ENCODE measurements at regions of chr2 and their contacts with region 1.

Region 1: DNA sequence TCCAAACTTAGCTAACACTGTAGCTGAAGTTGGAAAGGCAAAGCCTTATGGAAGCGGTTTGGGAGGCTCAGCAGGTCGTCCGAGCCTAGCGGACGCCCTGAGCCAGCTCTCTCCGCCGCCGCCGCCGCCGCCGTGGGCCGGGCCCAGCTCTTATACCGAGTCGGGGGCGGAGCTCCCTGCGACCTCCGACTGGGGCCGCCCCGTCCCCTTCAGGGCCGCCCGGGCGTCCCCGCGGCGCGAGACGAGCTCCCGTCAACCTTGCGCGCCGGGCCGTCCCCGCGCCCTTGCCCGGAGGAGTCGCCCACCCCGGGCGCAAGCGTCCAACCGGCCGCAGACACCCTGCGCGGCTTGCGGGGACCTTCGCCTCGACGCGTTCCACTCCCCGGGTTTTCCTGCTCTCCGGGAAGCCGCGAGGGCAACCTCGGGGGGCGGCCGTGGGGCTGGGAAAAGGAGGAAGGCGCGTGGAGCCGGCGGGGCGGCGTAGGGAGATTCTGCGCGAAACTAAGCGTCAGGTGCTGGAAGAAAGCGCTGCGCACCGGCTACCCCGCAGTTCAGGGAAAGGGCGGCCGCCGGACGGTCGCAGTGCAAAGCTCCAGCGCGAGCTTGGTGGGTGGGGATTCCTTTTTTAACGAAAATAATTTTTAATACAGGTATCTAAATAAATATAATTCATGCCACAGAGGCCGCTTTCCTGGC is at the start of gene SLC40A1:
- DNase-seq: peak; percentile 67
- ATAC-seq: peak; percentile 96
- H3K4me3 ChIP-seq: peak within 1 kb of the TSS; percentile 64 to 78 (median 77)
- H3K27ac ChIP-seq: peak within 1 kb of the TSS; percentile 56
- H3K4me1 ChIP-seq: peaks cover 66% of the 10 kb centered on the region
- H3K27me3 ChIP-seq: peaks cover 0 to 11% of the 10 kb centered on the region in 2 experiments; a peak in 2 of 5 replicates
- CTCF ChIP-seq: no peak
- EP300 ChIP-seq: no peak
- POLR2A ChIP-seq: peak; percentile 73 to 91
- RAD21 ChIP-seq: peak; percentile 72
- total RNA-seq, gene SLC40A1: 10.6 and 19.2 TPM in 2 replicates

Region 2: DNA sequence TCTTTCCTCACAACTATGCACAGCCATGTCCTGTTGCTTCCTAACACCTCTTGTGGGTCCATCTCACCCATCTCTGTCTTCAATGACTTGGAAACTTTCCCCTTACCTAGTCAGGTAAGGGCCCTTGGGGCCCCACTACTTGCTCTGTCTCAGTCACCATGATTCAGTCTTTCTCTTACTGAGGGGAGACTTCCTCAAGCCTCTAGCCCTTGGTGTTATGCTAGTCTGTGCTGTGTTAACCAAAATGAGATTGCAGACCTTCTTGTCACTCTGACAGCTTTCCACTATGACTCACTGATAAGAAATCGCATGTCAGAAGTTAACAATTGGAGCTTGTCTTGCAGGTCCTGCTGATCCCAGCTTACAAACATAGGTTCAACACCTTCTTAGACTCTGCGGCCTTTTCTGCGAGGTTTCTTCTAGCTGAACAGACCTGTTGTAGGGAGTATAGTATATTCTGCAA is 74.3 kb before region 1 on chr2:
- CTCF ChIA-PET with region 1: no interaction called
- POLR2A ChIA-PET with region 1: interaction called, 17 read pairs
- in situ Hi-C with region 1: no loop called
- intact Hi-C with region 1: no loop called
- DNase-seq: peak; percentile 87
- ATAC-seq: peak; percentile 89
- H3K4me3 ChIP-seq: no peak overlapping the region
- H3K27ac ChIP-seq: no peak overlapping the region
- H3K4me1 ChIP-seq: peaks cover 41% of the 10 kb centered on the region
- H3K27me3 ChIP-seq: no peaks in the 10 kb centered on the region
- CTCF ChIP-seq: no peak
- EP300 ChIP-seq: peak in 1 of 2 experiments; percentile 65; a peak in 2 of 4 replicates
- POLR2A ChIP-seq: no peak
- RAD21 ChIP-seq: no peak

Region 3: GRCh38 chr2:189542154-189542882 is 38.5 kb before region 1 on chr2:
- CTCF ChIA-PET with region 1: no interaction called
- POLR2A ChIA-PET with region 1: interaction called, 10 read pairs
- in situ Hi-C with region 1: no loop called
- intact Hi-C with region 1: no loop called
- DNase-seq: peak; percentile 87
- ATAC-seq: peak; percentile 90
- H3K4me3 ChIP-seq: no peak overlapping the region
- H3K27ac ChIP-seq: peak overlapping the region; percentile 11
- H3K4me1 ChIP-seq: peaks cover 32% of the 10 kb centered on the region
- H3K27me3 ChIP-seq: no peaks in the 10 kb centered on the region
- CTCF ChIP-seq: no peak
- EP300 ChIP-seq: peak in 1 of 2 experiments; percentile 77; a peak in 2 of 4 replicates
- POLR2A ChIP-seq: no peak
- RAD21 ChIP-seq: no peak

Region 4: DNA sequence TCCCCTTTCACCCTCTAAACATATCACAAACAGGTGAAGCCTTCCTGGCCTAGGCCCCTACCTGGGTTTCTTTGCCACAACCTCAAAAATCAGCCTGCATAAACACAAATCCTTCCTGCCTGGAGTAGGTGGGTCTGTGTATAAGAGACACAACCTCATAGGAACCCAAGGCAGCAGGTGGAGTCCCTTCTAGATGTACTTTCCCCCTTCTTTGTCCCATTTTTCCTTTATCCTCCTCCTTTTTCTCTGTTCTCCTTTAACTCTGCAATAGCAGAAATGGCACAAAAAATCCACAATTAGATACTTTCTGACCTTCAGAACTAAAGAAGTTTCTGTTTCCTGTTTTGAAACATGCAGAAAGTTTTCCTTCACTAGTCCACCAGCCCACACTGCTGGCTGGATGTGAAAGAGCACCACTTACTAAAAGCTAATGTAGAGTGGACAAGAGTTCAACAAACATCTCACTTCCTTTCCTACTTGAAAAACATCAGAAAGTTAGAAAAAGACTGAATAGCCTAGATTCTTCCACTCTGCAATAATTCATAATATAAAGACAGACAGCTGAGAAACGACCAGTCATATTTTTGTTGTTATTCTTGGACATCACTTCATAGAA is 11.4 kb before region 1 on chr2:
- CTCF ChIA-PET with region 1: no interaction called
- POLR2A ChIA-PET with region 1: interaction called, 12 read pairs
- in situ Hi-C with region 1: no loop called
- intact Hi-C with region 1: no loop called
- DNase-seq: no peak
- ATAC-seq: peak; percentile 60; the same call in 2 of the 3 replicates
- H3K4me3 ChIP-seq: no peak overlapping the region
- H3K27ac ChIP-seq: peak overlapping the region; percentile 0
- H3K4me1 ChIP-seq: peaks cover 33% of the 10 kb centered on the region
- H3K27me3 ChIP-seq: no peaks in the 10 kb centered on the region
- CTCF ChIP-seq: no peak
- EP300 ChIP-seq: no peak
- POLR2A ChIP-seq: no peak
- RAD21 ChIP-seq: no peak

Region 5: DNA sequence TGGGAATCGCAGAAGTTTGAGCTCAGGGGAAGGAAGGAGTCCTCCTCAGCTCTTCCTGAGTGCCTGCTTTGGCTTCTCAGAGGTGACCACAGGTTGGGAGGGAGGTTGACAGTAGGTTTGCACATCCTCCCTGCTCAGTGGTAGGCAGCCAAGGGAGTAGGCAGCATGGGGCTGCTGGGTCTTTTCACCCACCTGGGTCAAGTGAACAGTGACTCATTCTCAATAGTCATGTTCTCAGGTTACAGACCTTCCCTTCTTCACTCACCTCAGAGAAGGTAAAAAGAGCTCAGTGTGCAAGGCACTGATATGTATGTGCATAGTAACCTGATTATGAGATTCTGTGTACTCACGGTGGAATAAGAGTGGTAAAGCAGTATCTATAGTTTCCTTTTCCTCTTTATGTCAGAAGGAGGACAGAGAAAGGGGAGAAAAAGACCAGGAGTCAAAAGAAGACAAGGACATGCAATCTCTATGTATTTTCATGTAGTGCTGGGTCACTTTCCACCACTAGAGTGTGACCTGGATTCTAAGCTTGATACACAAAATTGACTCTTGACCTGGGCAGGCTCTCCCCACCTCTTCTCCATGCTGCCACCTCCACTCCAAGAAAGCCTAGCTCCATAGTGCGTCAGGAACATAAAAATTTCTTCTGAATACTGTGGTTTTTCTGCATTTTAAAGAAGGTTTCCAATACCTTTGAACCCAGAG is 44.0 kb after region 1 on chr2:
- CTCF ChIA-PET with region 1: no interaction called
- POLR2A ChIA-PET with region 1: interaction called, 8 read pairs
- in situ Hi-C with region 1: no loop called
- intact Hi-C with region 1: loop called (anchors 2 kb)
- DNase-seq: peak; percentile 23
- ATAC-seq: peak; percentile 79
- H3K4me3 ChIP-seq: no peak overlapping the region
- H3K27ac ChIP-seq: no peak overlapping the region
- H3K4me1 ChIP-seq: peaks cover 12% of the 10 kb centered on the region
- H3K27me3 ChIP-seq: no peaks in the 10 kb centered on the region
- CTCF ChIP-seq: no peak
- EP300 ChIP-seq: no peak
- POLR2A ChIP-seq: no peak
- RAD21 ChIP-seq: no peak